Activated T-helper 1 cell treated with anti-CD3 and anti-CD28 coated beads, Interleukin-12 subunit alpha, Interleukin-12 subunit beta, Interleukin-2, Interleukin-4 antibody, amounts not matched to agents 30 ng/mL and 10 ng/mL and 1 ng/mL, durations not matched to agents 14 hours and 24 hours and 36 hours (primary cell): ENCODE measurements at regions of chr6 and their contacts with region 1.

Region 1: DNA sequence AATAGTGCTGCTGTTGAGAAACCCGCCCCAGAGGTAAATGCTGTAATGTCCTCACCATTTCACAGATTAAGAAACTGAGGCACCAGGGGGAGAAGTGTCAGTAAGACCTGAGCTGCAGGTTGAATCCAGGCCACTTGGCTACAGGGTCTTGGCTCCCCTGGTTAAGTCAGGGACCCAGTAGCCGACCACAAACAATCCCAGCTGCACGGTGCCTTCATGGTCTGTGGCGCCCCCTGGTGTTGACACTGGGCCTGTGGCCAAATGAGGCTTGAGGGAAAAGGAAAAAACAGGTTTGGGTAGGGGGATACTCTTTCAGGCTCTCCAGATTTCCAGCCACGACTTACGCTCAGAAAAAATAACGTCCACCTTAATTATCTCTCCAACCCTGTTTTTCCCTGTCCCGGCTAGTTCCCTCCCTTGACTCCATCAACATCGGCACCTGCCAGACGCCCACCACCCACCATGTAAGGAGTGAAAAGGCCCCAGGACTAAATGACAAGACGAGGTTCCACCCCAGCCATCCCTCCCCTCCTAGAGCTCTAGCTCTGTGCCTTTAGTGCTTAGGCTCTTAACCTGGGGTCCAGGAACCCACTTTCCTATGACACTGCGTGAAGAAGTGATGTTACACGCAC is 47.7 kb upstream of the POLR1H start:
- DNase-seq: peak; percentile 27
- H3K4me3 Mint-ChIP-seq: no peak overlapping the region
- H3K27ac Mint-ChIP-seq: no peak overlapping the region
- H3K4me1 Mint-ChIP-seq: no peaks in the 10 kb centered on the region
- H3K27me3 Mint-ChIP-seq: peaks cover 9% of the 10 kb centered on the region

Region 2: DNA sequence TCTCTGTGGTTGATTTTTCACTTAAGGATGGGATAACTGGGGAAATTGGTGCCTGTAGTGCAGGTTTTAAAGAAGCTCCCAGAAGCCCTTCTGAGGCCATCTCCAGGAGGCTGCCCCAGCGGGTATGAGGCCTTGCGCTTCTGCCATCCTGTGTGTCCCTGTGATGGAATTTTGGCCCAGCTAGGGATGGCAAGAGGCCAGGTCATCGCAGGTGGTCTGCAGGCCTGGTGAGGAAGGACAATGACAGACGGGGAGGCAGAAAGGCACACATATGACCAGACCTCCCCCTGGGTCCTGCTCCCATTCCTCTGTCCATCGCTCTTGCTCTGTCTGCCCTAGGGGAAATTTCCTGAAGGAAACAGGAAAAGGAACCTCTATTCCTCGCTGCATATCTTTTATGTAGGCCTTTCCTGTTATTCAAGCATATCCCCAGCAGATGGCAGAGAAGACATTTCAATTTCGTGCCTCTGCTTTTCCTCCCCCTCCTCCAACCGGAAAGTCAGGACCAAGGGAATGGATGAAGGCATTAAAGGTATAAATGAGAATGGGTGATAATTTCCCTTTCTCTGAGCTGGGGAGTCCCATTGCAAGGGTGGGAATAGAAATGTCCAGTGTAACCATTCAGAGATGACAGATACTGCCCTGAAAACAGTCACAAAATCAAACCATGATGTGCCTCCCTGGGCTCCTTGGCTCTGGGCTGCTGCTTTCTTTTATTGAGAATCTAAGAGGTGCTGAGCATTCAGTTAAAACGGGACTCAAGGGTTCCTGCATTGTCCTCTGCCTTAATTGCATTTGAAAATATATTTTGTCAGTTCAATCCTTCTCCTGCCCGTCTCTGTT is 307.8 kb before region 1 on chr6:
- intact Hi-C with region 1: loop called (anchors 5 kb)
- DNase-seq: no peak
- H3K4me3 Mint-ChIP-seq: no peak overlapping the region
- H3K27ac Mint-ChIP-seq: no peak overlapping the region
- H3K4me1 Mint-ChIP-seq: peaks cover 60% of the 10 kb centered on the region
- H3K27me3 Mint-ChIP-seq: peaks cover 30% of the 10 kb centered on the region

Region 3: GRCh38 chr6:29737707-29738630 is 275.4 kb before region 1 on chr6:
- intact Hi-C with region 1: loop called (anchors 1 kb)
- DNase-seq: peak; percentile 63
- H3K4me3 Mint-ChIP-seq: no peak overlapping the region
- H3K27ac Mint-ChIP-seq: no peak overlapping the region
- H3K4me1 Mint-ChIP-seq: peaks cover 12% of the 10 kb centered on the region
- H3K27me3 Mint-ChIP-seq: no peaks in the 10 kb centered on the region